T-cell (primary cell): ENCODE measurements at regions of chr5 and their contacts with region 1.

Region 1: GRCh38 chr5:83564069-83564749 is 92.7 kb downstream of the VCAN start:
- DNase-seq: peak in 1 of 35 experiments; percentile 52
- ATAC-seq: no peak
- H3K4me3 ChIP-seq: no peak overlapping the region
- H3K4me3 Mint-ChIP-seq: no peak overlapping the region
- H3K27ac ChIP-seq: no peak overlapping the region
- H3K27ac Mint-ChIP-seq: no peak overlapping the region
- H3K4me1 ChIP-seq: no peaks in the 10 kb centered on the region
- H3K4me1 Mint-ChIP-seq: no peaks in the 10 kb centered on the region
- H3K27me3 ChIP-seq: no peaks in the 10 kb centered on the region
- H3K27me3 Mint-ChIP-seq: peaks cover 8 to 13% of the 10 kb centered on the region in 2 donors

Region 2: GRCh38 chr5:82351754-82352145 is 1212.5 kb before region 1 on chr5:
- CTCF ChIA-PET with region 1: interaction called, 7 to 27 read pairs
- POLR2A ChIA-PET with region 1: no interaction called
- DNase-seq: peak in 3 of 35 experiments; percentile 4 to 77 (median 23)
- ATAC-seq: peak in 3 of 4 experiments; percentile 51 to 60 (median 56)
- H3K4me3 ChIP-seq: no peak overlapping the region
- H3K4me3 Mint-ChIP-seq: no peak overlapping the region
- H3K27ac ChIP-seq: no peak overlapping the region
- H3K27ac Mint-ChIP-seq: no peak overlapping the region
- H3K4me1 ChIP-seq: peaks cover under 1 to 3% of the 10 kb centered on the region in 2 experiments
- H3K4me1 Mint-ChIP-seq: peaks cover 11 to 19% (median 15%) of the 10 kb centered on the region in 3 donors
- H3K27me3 ChIP-seq: peaks cover 0 to 2% of the 10 kb centered on the region in 2 experiments
- H3K27me3 Mint-ChIP-seq: no peaks in the 10 kb centered on the region

Region 3: GRCh38 chr5:83538786-83539462 is 25.3 kb before region 1 on chr5:
- CTCF ChIA-PET with region 1: no interaction called
- POLR2A ChIA-PET with region 1: no interaction called
- DNase-seq: no peak
- ATAC-seq: no peak
- H3K4me3 ChIP-seq: no peak overlapping the region
- H3K4me3 Mint-ChIP-seq: peak overlapping the region in 1 of 3 donors; percentile 35
- H3K27ac ChIP-seq: no peak overlapping the region
- H3K27ac Mint-ChIP-seq: peak overlapping the region in 1 of 2 donors; percentile 73
- H3K4me1 ChIP-seq: no peaks in the 10 kb centered on the region
- H3K4me1 Mint-ChIP-seq: peaks cover 7 to 14% (median 10%) of the 10 kb centered on the region in 3 donors
- H3K27me3 ChIP-seq: no peaks in the 10 kb centered on the region
- H3K27me3 Mint-ChIP-seq: peaks cover 4 to 13% of the 10 kb centered on the region in 2 donors

Region 4: DNA sequence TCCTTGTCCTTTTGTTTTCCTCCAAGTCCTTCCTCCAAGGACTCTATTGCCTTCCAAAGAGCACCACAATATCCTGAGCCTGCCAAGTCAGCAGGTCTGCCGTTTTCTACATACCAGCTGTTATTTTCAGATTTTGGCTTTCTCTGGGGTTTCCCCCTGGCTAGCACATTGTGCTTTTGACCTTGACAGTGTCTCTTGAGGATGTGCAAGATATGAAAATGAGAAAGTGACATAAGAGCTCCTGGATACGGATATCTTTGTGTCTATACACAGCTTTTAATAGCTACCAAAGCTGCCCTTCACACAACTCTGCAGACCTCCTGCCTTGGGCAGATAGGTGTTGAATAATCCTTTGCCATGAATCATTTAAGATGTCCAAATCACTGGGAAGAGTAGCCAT is 89.5 kb after region 1 on chr5:
- CTCF ChIA-PET with region 1: no interaction called
- POLR2A ChIA-PET with region 1: no interaction called
- DNase-seq: no peak
- ATAC-seq: no peak
- H3K4me3 ChIP-seq: no peak overlapping the region
- H3K4me3 Mint-ChIP-seq: no peak overlapping the region
- H3K27ac ChIP-seq: no peak overlapping the region
- H3K27ac Mint-ChIP-seq: no peak overlapping the region
- H3K4me1 ChIP-seq: no peaks in the 10 kb centered on the region
- H3K4me1 Mint-ChIP-seq: no peaks in the 10 kb centered on the region
- H3K27me3 ChIP-seq: no peaks in the 10 kb centered on the region
- H3K27me3 Mint-ChIP-seq: peaks cover 5 to 6% of the 10 kb centered on the region in 2 donors

Region 5: DNA sequence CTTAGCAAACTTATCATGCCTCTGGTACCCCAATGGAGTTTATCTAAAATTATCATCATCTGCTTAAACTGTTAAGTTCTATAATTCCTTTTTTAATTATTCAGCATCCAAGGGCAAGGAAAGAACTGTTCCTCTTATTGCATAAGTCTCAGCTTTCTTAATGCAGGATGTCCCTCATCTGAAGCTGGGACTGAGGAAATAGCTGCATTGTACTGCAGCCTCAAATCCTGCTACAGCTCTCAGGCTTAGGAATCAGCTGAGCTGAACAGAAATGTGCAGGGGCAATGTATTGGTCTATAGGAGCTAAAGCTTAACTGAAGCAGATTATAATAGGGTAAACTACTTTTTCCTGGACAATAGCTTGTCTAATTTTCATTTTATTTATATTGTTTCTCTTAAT is 108.4 kb after region 1 on chr5:
- CTCF ChIA-PET with region 1: no interaction called
- POLR2A ChIA-PET with region 1: no interaction called
- DNase-seq: no peak
- ATAC-seq: no peak
- H3K4me3 ChIP-seq: no peak overlapping the region
- H3K4me3 Mint-ChIP-seq: no peak overlapping the region
- H3K27ac ChIP-seq: no peak overlapping the region
- H3K27ac Mint-ChIP-seq: no peak overlapping the region
- H3K4me1 ChIP-seq: no peaks in the 10 kb centered on the region
- H3K4me1 Mint-ChIP-seq: no peaks in the 10 kb centered on the region
- H3K27me3 ChIP-seq: no peaks in the 10 kb centered on the region
- H3K27me3 Mint-ChIP-seq: peaks cover 4 to 10% of the 10 kb centered on the region in 2 donors